ENCODE measurements at regions of chrX and their contacts with region 1.

Region 1: DNA sequence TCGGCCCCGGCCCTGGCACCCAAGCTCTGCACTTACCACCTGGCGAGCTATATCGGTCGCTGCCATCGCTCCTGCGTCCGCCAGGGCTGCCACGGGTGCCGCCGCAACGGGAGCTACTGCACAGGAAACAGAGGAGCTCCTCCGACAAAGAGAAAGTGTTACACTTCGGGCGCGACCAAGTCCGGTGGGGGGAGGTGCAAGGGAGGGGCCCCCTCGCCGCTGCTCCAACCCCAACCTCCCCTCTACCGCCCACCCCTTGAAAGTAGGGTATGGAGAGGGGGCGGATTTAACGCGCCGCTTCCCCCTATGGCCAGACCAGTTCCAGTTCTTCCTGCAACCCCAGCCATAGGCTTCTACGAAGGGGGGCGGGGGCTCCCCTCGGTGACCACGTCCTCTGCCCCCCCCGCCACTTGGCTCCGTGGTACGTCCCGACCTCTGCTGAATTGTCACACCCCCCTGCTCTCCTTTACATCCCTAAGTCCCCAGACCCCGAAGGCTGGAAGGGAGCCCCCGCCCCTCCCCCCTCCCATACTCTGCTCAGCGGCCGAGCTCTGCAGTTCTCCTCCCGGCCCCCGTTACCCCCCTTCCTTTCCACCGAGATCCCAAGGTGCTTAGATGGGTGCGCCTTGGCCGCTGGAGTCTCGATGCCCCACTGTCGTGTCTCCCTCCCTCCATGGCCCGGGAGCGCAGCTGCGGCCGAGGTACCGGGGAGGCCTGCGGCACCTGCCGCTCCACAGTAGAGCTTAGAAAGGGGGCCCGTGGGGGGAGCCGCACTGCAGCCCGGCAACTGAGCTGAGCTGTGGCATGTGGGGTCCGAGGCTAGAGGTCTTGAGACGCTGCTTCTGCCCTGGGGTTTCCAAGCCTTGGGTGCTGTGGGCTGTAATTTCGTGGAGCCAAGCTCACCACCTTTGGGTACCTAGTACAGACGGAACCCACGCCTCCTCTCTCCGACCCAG is at the start of gene SEPTIN6:
- DNase-seq: peak; percentile 86
- H3K4me3 Mint-ChIP-seq: peak within 1 kb of the TSS; percentile 98
- H3K27ac Mint-ChIP-seq: peak within 1 kb of the TSS; percentile 100
- H3K4me1 Mint-ChIP-seq: peaks cover 17% of the 10 kb centered on the region
- H3K27me3 Mint-ChIP-seq: no peaks in the 10 kb centered on the region
- total RNA-seq, gene SEPTIN6: 214 to 219 TPM

Region 2: DNA sequence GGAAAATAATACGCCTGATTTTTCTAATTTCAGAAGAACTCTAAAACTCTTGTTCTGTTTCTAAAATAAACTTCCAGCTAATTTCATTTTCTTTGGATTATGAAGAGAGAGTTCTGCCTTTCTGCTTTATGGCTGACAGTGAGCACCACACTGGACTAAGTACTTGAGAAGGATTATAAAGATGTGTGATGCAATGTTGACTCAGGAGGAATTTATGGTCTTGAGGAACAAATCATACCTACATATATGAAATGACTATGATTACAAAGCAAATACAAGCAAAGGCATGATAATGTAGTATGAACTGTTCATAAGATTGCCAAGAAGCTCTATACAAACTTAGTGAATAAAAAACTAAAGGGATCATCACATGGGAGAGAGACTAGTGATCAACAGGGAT is 238.1 kb before region 1 on chrX:
- CTCF ChIA-PET with region 1: no interaction called
- POLR2A ChIA-PET with region 1: no interaction called
- DNase-seq: no peak
- H3K4me3 Mint-ChIP-seq: no peak overlapping the region
- H3K27ac Mint-ChIP-seq: no peak overlapping the region
- H3K4me1 Mint-ChIP-seq: no peaks in the 10 kb centered on the region
- H3K27me3 Mint-ChIP-seq: no peaks in the 10 kb centered on the region

Region 3: GRCh38 chrX:119606280-119607015 is 86.9 kb before region 1 on chrX and contains the start of gene NKRF:
- CTCF ChIA-PET with region 1: interaction called, 6 read pairs
- POLR2A ChIA-PET with region 1: interaction called, 22 read pairs
- DNase-seq: peak; percentile 92
- H3K4me3 Mint-ChIP-seq: peak within 1 kb of the TSS; percentile 92
- H3K27ac Mint-ChIP-seq: peak within 1 kb of the TSS; percentile 90
- H3K4me1 Mint-ChIP-seq: peaks cover 42% of the 10 kb centered on the region
- H3K27me3 Mint-ChIP-seq: peaks cover 9% of the 10 kb centered on the region
- total RNA-seq, gene NKRF: 13.8 to 14.7 TPM

Region 4: GRCh38 chrX:119624951-119625668 is 68.2 kb before region 1 on chrX:
- CTCF ChIA-PET with region 1: no interaction called
- POLR2A ChIA-PET with region 1: no interaction called
- DNase-seq: no peak
- H3K4me3 Mint-ChIP-seq: no peak overlapping the region
- H3K27ac Mint-ChIP-seq: no peak overlapping the region
- H3K4me1 Mint-ChIP-seq: no peaks in the 10 kb centered on the region
- H3K27me3 Mint-ChIP-seq: no peaks in the 10 kb centered on the region

Region 5: GRCh38 chrX:119669424-119670037 is 23.8 kb before region 1 on chrX:
- CTCF ChIA-PET with region 1: interaction called, 12 read pairs
- POLR2A ChIA-PET with region 1: interaction called, 337 read pairs
- DNase-seq: no peak
- H3K4me3 Mint-ChIP-seq: no peak overlapping the region
- H3K27ac Mint-ChIP-seq: no peak overlapping the region
- H3K4me1 Mint-ChIP-seq: peaks cover 9% of the 10 kb centered on the region
- H3K27me3 Mint-ChIP-seq: no peaks in the 10 kb centered on the region

Region 6: DNA sequence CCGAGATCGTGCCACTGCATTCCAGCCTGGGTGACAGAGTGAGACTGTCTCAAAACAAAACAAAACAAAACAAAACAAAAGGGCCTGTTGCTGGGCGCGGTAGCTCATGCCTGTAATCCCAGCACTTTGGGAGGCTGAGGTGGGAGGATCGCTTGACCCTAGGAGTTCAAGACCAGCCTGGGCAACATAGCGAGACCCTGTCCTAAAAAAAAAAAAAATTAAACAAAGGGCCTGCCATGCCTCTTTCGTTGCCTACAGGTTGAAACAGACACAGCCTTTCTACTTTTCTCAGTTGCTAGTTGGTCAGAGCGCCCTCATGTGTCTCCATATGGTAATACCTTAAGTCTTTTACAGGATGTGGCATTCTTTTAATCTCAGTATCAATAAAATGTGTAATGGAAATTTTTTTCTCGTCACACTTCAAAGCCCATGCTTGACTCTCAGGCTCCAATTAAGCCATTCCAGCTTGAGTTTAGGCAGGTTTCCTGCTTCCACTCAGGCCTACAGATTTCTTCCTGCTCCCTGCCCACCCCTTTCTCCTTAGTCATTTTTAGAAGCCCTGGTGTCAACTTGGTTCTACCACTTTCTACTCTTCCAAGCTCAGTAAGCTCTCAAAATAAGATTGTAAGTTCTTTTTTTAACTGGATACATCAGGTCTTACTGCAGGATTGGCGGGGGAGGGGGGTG is 60.4 kb after region 1 on chrX:
- CTCF ChIA-PET with region 1: interaction called, 4 read pairs
- POLR2A ChIA-PET with region 1: interaction called, 75 read pairs
- DNase-seq: peak; percentile 59
- H3K4me3 Mint-ChIP-seq: peak overlapping the region; percentile 8
- H3K27ac Mint-ChIP-seq: peak overlapping the region; percentile 100
- H3K4me1 Mint-ChIP-seq: peaks cover 44% of the 10 kb centered on the region
- H3K27me3 Mint-ChIP-seq: no peaks in the 10 kb centered on the region

Measured in activated CD4-positive, alpha-beta memory T cell treated with anti-CD3 and anti-CD28 coated beads, Interleukin-2, amount 10 ng/mL, durations not matched to agents 7 days and 5 days (primary cell).